Activated naive CD4-positive, alpha-beta T cell treated with anti-CD3 and anti-CD28 coated beads, Interleukin-2, amount 10 ng/mL, durations not matched to agents 7 days and 5 days (primary cell): ENCODE measurements at regions of chr1 and their contacts with region 1.

Region 1: DNA sequence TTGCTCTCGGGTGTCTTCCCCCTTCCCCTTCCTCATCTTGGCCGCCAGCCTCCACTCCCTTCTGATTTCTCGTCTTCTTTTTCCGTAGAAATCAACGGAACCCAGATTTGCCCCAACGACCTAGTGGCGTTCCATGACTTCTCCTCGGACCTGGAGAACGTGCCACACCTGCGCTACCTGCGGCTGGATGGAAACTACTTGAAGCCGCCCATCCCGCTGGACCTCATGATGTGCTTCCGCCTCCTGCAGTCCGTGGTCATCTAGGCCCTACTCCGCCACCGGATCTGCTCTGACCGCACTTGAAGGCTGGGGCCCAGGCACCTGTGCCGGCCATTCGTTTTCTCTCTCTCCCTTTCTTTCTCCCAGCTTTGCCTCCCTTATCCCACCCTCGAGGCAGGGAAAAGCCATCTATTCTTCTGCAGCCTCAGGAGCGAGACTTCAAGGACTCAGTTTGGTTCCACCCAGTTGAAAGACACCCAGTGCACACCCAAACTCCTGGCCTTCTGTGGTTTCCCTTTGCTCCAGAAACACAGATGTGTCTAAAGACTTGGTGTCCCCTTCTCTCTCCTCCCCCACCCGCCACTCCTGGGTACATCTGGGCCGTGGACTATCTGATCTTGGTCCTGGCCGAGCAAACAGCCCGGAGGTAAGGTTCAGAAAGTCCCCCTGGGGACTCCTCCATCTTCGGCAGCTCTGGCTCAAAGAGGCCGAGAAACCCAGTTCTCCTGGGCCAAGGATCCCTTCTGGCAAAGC is 7.2 kb upstream of the OPTC start:
- DNase-seq: no peak
- H3K4me3 Mint-ChIP-seq: peak overlapping the region; percentile 61
- H3K27ac Mint-ChIP-seq: no peak overlapping the region
- H3K4me1 Mint-ChIP-seq: peaks cover 6% of the 10 kb centered on the region
- H3K27me3 Mint-ChIP-seq: peaks cover 16% of the 10 kb centered on the region

Region 2: DNA sequence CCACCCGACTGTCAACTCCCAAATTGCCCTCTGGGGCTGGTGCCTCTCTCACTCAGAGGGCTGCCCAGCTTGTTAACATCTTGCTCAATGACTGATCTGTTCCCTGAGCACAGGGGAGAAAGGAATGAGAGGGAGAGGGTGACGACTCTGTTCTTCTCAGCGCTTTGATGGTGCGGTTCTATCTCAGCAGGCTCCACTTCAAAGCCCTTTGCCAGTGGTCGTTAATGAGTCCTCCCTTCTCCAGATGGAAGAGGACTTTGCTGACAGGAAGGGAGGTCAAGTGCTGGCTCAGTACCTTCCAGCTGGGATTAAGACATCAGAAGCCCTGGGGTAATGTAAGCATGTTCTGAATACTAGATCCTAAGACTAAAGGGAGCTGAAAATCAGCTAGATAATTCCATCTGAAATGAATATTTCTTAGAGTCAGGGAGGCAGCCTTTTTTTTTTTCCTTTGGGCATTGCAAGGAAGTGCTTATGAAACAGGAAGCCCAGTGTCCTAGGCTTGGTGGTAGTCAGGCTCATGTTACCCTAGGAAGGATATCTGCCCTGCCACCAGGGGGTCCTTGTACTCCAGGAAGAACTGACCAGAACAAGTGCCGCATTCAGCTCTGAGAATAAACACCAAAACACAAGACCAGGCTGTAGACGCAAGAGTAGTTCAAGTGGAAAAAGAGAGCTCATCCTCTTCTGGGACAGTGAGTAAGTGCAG is 140.6 kb before region 1 on chr1:
- CTCF ChIA-PET with region 1: interaction called, 152 read pairs
- DNase-seq: no peak
- H3K4me3 Mint-ChIP-seq: no peak overlapping the region
- H3K27ac Mint-ChIP-seq: no peak overlapping the region
- H3K4me1 Mint-ChIP-seq: peaks cover 12% of the 10 kb centered on the region
- H3K27me3 Mint-ChIP-seq: peaks cover 85% of the 10 kb centered on the region

Region 3: DNA sequence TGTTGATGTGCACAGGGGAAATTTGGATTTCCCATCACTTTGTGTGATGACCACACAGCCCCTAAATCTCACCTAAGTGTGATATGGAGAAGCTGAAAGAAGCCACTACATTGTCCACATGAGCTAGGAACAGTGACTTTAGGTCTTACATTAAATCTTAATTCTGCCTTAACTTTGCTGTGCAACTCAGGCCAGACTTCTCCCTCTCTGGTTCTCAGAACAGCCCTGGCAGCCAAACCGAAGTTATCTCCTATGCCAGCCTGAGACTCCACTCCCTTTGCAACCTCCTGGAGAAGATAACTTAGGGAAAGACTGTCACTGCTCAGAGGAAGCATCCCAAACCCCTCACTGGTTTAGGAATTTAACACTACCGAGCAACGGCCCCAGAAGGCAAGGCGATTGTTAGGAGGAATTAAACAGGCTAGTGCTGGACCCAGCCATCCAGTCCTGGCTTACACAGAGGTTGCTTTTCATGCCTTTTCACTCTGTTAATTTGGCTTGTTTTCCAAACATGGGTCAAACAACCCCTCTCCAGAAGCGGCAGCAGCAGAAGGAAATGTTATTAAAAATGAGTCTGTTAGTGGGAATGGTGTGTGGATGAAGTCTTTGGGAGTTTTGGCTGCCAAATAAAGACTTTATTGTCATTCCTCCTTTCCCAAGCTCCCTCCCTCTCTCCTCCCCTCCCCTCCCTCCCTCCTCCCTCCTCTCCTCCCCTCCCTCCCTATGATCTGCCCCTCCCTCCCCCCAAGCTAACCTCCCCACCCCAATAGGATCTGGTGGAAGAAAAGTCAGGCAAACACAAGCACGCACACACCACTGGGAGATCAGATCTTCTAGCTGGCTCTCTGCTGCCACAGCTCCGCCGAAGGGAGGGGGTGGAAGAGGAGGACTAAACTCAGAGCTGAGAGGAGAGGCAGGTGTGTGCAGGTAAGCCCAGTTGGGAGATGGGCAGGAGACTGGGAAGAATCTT is 11.5 kb before region 1 on chr1 and contains the start of gene PRELP:
- CTCF ChIA-PET with region 1: interaction called, 29 read pairs
- DNase-seq: no peak
- H3K4me3 Mint-ChIP-seq: no peak within 1 kb of the TSS
- H3K27ac Mint-ChIP-seq: no peak within 1 kb of the TSS
- H3K4me1 Mint-ChIP-seq: no peaks in the 10 kb centered on the region
- H3K27me3 Mint-ChIP-seq: peaks cover 69% of the 10 kb centered on the region